CD4-positive, alpha-beta memory T cell (primary cell): ENCODE measurements at regions of chr2 and their contacts with region 1.

Region 1: GRCh38 chr2:38508311-38509039 is 94.3 kb downstream of the HNRNPLL start:
- DNase-seq: peak; percentile 69 to 76 (median 70)
- H3K4me3 ChIP-seq: no peak overlapping the region
- H3K4me3 Mint-ChIP-seq: no peak overlapping the region
- H3K27ac ChIP-seq: no peak overlapping the region
- H3K27ac Mint-ChIP-seq: peak overlapping the region in 2 of 7 donors; percentile 3 to 63
- H3K4me1 ChIP-seq: no peaks in the 10 kb centered on the region
- H3K4me1 Mint-ChIP-seq: peaks cover 2 to 6% (median 4%) of the 10 kb centered on the region in 4 donors
- H3K27me3 ChIP-seq: no peaks in the 10 kb centered on the region
- H3K27me3 Mint-ChIP-seq: peaks cover 4 to 5% of the 10 kb centered on the region in 2 donors

Region 2: GRCh38 chr2:37982147-37982582 is 526.3 kb before region 1 on chr2:
- CTCF ChIA-PET with region 1: interaction called, 10 read pairs
- POLR2A ChIA-PET with region 1: no interaction called
- intact Hi-C with region 1: loop called (anchors 1 kb)
- DNase-seq: peak in 4 of 5 donors; percentile 31 to 47 (median 32)
- H3K4me3 ChIP-seq: no peak overlapping the region
- H3K4me3 Mint-ChIP-seq: no peak overlapping the region
- H3K27ac ChIP-seq: no peak overlapping the region
- H3K27ac Mint-ChIP-seq: no peak overlapping the region
- H3K4me1 ChIP-seq: no peaks in the 10 kb centered on the region
- H3K4me1 Mint-ChIP-seq: peaks cover 0 to 3% (median 1%) of the 10 kb centered on the region in 4 donors
- H3K27me3 ChIP-seq: no peaks in the 10 kb centered on the region
- H3K27me3 Mint-ChIP-seq: no peaks in the 10 kb centered on the region

Region 3: DNA sequence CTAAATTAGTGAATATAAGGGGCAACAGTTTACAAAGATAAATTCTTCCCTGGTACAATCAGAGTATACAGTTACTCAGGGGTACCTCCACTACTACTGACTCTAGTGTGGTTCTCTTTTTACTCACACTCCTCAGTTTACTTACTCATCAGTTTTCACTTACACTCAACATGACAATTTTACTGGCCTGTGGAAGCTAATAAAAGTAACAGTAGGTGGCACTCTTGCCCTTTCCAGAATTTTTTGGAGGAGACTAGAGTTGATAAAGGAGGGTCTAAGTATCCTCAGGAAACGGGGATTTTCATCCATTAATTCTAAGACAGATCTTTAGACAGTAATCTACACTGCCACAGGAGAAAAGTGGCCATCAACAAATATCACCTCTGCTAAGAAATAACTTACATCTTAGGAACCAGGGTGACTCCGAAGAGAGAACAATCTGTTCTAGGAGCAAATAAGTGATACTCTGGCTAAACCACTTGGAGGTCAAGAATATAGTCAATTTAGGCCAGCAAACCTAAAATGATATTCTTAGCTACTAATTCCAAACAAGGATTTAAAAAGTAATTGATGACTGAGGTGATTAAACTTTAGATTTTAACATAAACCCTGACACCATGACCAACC is 192.7 kb before region 1 on chr2:
- CTCF ChIA-PET with region 1: interaction called, 242 read pairs
- POLR2A ChIA-PET with region 1: interaction called, 10 read pairs
- intact Hi-C with region 1: loop called (anchors 1 kb)
- DNase-seq: peak in 4 of 5 donors; percentile 33 to 54 (median 37)
- H3K4me3 ChIP-seq: no peak overlapping the region
- H3K4me3 Mint-ChIP-seq: no peak overlapping the region
- H3K27ac ChIP-seq: no peak overlapping the region
- H3K27ac Mint-ChIP-seq: peak overlapping the region in 3 of 7 donors; percentile 19 to 83 (median 57)
- H3K4me1 ChIP-seq: no peaks in the 10 kb centered on the region
- H3K4me1 Mint-ChIP-seq: no peaks in the 10 kb centered on the region
- H3K27me3 ChIP-seq: no peaks in the 10 kb centered on the region
- H3K27me3 Mint-ChIP-seq: no peaks in the 10 kb centered on the region

Region 4: DNA sequence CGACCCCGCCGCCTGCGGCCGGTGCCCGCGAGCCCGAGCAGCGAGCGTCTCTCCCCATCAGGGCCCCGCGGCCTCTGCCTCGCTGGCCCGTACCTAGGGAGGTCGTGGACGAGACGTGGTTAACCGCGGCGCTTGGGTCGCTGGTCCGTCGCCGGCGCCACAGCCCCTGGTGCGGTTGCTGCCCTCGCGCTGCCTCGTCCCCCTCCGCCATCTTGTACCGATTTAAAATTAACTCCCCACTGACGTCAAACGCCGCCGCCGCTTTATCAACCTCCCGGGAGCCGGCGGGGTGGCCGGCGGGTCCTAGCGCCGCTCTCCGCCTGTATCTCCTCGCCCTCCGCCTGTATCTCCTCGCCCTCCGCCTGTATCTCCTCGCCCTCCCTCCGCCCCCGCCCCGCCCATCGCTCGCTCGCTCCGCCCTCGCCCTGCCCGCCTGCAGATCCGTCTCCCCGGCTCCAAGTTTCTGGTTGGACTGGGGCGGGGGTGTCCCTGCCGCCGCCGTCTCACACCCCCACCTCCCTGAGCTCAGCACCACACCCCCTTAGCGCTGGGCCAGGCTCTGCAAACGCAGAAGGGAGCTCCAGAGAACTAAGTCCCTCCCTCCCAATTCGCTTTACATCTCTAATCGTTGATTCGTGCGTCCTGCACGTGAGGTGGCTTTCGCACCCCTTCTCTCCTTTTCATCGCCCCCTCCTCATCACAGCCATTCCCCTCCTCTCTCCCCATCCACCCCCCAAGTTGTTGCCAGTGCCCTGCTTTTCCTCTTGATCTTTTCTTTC is 131.2 kb before region 1 on chr2 and contains the start of gene ATL2:
- CTCF ChIA-PET with region 1: interaction called, 7 read pairs
- POLR2A ChIA-PET with region 1: no interaction called
- intact Hi-C with region 1: loop called (anchors 2 kb)
- DNase-seq: peak; percentile 91 to 97 (median 94)
- H3K4me3 ChIP-seq: peak within 1 kb of the TSS; percentile 67 to 85
- H3K4me3 Mint-ChIP-seq: peak within 1 kb of the TSS; percentile 93 to 100 (median 96)
- H3K27ac ChIP-seq: peak within 1 kb of the TSS; percentile 89
- H3K27ac Mint-ChIP-seq: peak within 1 kb of the TSS; percentile 90 to 98 (median 97)
- H3K4me1 ChIP-seq: peaks cover 63% of the 10 kb centered on the region
- H3K4me1 Mint-ChIP-seq: peaks cover 45 to 81% (median 65%) of the 10 kb centered on the region in 4 donors
- H3K27me3 ChIP-seq: no peaks in the 10 kb centered on the region
- H3K27me3 Mint-ChIP-seq: no peaks in the 10 kb centered on the region
- total RNA-seq, gene ATL2: 51.5 to 64.3 TPM

Region 5: GRCh38 chr2:38498045-38498481 is 10.4 kb before region 1 on chr2:
- CTCF ChIA-PET with region 1: interaction called, 35 read pairs
- POLR2A ChIA-PET with region 1: no interaction called
- intact Hi-C with region 1: no loop called
- DNase-seq: no peak
- H3K4me3 ChIP-seq: no peak overlapping the region
- H3K4me3 Mint-ChIP-seq: no peak overlapping the region
- H3K27ac ChIP-seq: no peak overlapping the region
- H3K27ac Mint-ChIP-seq: no peak overlapping the region
- H3K4me1 ChIP-seq: peaks cover 5% of the 10 kb centered on the region
- H3K4me1 Mint-ChIP-seq: peaks cover 0 to 1% (median 0%) of the 10 kb centered on the region in 4 donors
- H3K27me3 ChIP-seq: no peaks in the 10 kb centered on the region
- H3K27me3 Mint-ChIP-seq: peaks cover 8 to 12% of the 10 kb centered on the region in 2 donors

Region 6: GRCh38 chr2:38554973-38555595 is 46.6 kb after region 1 on chr2:
- CTCF ChIA-PET with region 1: no interaction called
- POLR2A ChIA-PET with region 1: no interaction called
- intact Hi-C with region 1: no loop called
- DNase-seq: no peak
- H3K4me3 ChIP-seq: no peak overlapping the region
- H3K4me3 Mint-ChIP-seq: no peak overlapping the region
- H3K27ac ChIP-seq: no peak overlapping the region
- H3K27ac Mint-ChIP-seq: peak overlapping the region in 1 of 7 donors; percentile 32
- H3K4me1 ChIP-seq: peaks cover 5% of the 10 kb centered on the region
- H3K4me1 Mint-ChIP-seq: peaks cover 9 to 20% (median 16%) of the 10 kb centered on the region in 4 donors
- H3K27me3 ChIP-seq: no peaks in the 10 kb centered on the region
- H3K27me3 Mint-ChIP-seq: no peaks in the 10 kb centered on the region

Region 7: DNA sequence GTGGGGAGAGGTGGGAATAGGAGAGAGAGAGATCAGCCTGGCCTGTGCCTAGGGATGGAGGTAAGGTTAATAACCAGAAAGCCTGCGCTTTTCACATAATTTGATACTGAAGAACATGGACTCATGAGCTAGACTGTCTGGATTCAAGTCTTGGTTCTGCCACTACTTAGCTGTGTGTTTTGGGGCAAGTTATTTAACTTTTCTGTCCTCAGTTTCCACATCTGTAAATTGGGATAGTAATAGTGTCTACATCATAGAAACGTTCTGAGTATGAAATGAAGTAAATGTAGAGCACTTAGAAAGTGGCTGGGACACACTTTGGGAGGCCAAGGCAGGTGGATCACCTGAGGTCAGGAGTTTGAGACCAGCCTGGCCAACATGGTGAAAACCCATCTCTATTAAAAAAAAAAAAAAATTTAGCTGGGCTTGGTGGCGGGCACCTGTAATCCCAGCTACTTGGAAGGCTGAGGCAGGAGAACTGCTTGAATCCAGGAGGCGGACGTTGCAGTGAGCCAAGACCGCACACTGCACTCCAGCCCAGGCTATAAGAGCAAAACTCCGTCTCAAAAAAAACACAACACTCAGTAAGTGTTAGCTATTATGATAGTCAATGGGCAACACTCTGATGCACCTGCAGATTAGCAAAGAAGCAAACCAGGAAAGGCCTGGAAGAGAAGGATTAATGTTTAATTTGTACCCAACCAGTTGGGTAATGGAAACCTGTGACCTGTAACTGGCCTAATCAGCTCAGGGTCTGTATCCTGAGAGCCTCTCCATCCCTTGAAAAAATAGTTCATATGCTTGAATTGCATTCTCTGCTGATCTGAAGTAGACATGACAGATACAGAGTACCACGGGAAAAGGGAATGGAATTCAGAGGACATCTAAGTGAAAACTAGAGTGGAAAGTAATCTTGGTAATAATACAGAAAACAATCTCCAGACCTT is 164.2 kb after region 1 on chr2:
- CTCF ChIA-PET with region 1: no interaction called
- POLR2A ChIA-PET with region 1: no interaction called
- intact Hi-C with region 1: no loop called
- DNase-seq: no peak
- H3K4me3 ChIP-seq: no peak overlapping the region
- H3K4me3 Mint-ChIP-seq: peak overlapping the region in 6 of 8 donors; percentile 4 to 73 (median 28)
- H3K27ac ChIP-seq: no peak overlapping the region
- H3K27ac Mint-ChIP-seq: peak overlapping the region; percentile 57 to 93 (median 87)
- H3K4me1 ChIP-seq: peaks cover 87% of the 10 kb centered on the region
- H3K4me1 Mint-ChIP-seq: peaks cover 47 to 86% (median 67%) of the 10 kb centered on the region in 4 donors
- H3K27me3 ChIP-seq: no peaks in the 10 kb centered on the region
- H3K27me3 Mint-ChIP-seq: no peaks in the 10 kb centered on the region